Right cardiac atrium (tissue), 5 donors: ENCODE measurements at regions of chr11 and their contacts with region 1.

Region 1: DNA sequence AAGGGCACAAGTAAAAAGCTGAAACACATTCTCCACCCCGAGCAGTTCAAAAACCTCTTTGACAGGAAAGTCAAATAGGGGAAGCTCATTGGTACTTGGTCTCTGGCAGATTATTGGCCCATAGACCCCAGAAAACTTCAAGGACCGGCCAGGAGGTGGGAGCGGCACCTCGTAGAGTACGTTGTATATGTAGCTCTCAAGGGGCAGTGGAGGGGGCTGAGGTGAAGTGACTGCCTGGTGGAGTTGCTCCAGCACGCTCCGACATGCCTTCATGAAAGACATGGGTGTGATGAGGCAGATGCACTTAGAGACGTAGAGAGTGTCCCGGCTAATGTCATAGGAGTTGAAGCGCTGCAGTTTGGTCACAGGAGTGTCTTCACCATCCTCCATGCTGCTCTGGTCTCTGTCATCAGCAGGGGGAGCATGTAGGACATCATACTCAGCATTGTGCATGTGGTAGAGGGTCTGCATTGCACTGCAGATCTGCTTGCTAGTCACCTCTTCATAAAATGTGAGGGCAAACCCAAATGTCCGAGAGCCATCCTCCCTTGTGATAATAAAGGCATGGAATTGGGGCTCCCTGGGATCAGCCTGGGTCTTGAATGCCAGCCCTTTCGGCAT is 61.3 kb downstream of the DENND5A start:
- DNase-seq: no peak
- ATAC-seq: peak; percentile 64 to 67
- H3K4me3 ChIP-seq: no peak overlapping the region
- H3K27ac ChIP-seq: no peak overlapping the region
- H3K4me1 ChIP-seq: peaks cover 3% of the 10 kb centered on the region
- H3K27me3 ChIP-seq: no peaks in the 10 kb centered on the region

Region 2: DNA sequence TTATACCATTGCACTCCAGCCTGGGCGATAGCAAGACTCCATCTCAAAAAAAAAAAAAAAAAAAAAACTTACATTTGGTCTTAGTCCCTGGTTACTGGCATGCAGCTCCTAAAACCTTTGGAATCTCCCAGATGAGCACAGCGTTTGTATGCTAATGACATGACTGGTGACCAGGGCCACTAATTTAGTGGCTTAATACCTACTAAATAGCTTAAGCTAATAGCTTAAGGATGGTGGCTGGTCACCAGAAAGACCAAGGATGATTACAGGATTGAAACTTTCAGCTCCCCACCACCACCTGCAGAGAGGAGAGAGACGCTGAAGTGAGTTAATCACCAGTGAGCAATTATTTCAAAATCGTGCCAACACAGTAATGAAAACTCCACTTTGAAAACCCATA is 24.3 kb after region 1 on chr11:
- intact Hi-C with region 1: loop called in 1 of 4 experiments (anchors 2 kb)
- DNase-seq: no peak
- ATAC-seq: no peak
- H3K4me3 ChIP-seq: no peak overlapping the region
- H3K27ac ChIP-seq: no peak overlapping the region
- H3K4me1 ChIP-seq: peaks cover 3% of the 10 kb centered on the region
- H3K27me3 ChIP-seq: no peaks in the 10 kb centered on the region